Activated T-helper 1 cell treated with anti-CD3 and anti-CD28 coated beads, Interleukin-12 subunit alpha, Interleukin-12 subunit beta, Interleukin-2, Interleukin-4 antibody, amounts not matched to agents 30 ng/mL and 10 ng/mL and 1 ng/mL, durations not matched to agents 14 hours and 24 hours and 36 hours (primary cell): ENCODE measurements at regions of chr16 and their contacts with region 1.

Region 1: DNA sequence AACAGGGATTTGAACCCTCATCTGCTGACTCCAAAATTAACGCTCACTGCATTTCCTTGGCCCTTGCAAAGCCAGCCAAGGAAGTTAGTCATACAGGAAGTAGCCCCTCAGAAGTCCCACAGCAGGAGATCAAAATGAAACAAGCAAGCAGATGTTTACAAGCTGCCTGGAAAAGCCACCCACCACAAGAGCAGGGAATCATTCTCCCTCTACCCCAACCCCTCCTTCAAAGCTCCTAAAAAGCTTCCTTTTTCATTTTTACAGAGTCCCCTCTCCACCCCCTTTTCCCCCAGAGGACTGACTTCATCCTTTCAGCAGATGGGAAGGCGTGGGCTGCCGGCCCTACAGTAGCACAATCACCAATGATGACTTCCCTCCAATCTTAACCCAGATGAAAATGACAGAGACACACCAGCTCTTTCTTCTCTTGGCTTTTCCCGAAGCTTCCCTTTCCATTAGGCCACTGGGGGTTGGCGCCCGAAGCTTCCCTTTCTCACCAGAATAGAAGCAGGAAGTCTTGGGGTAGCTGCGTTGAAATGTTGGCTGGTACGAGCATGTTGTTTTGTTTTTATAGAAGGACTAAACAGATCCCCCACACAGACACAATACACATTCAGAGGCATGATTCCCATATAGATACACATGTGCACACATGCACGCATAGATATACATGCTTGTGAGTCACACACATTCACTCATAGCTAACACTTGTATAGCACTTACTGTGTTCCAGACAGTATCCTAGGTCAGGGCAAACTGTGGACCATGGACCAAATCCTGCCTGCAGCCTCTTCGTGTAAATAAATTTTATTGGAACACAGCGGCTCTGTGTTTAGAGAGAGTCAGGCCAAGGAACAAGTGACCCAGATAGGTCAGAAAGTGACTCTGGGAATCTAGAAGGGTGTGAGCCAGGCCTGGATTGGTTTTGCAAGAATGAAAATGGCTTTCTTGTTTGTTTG is 17.4 kb downstream of the ITPRIPL2 start:
- DNase-seq: no peak
- H3K4me3 Mint-ChIP-seq: peak overlapping the region; percentile 62
- H3K27ac Mint-ChIP-seq: peak overlapping the region; percentile 73
- H3K4me1 Mint-ChIP-seq: peaks cover 49% of the 10 kb centered on the region
- H3K27me3 Mint-ChIP-seq: peaks cover 3% of the 10 kb centered on the region

Region 2: GRCh38 chr16:19067349-19068236 is 63.5 kb before region 1 on chr16 and contains the start of gene COQ7:
- intact Hi-C with region 1: no loop called
- DNase-seq: peak; percentile 97
- H3K4me3 Mint-ChIP-seq: peak within 1 kb of the TSS; percentile 84
- H3K27ac Mint-ChIP-seq: peak within 1 kb of the TSS; percentile 98
- H3K4me1 Mint-ChIP-seq: peaks cover 21% of the 10 kb centered on the region
- H3K27me3 Mint-ChIP-seq: peaks cover 1% of the 10 kb centered on the region
- total RNA-seq, gene COQ7: 17.3 and 19.6 TPM in 2 replicates

Region 3: DNA sequence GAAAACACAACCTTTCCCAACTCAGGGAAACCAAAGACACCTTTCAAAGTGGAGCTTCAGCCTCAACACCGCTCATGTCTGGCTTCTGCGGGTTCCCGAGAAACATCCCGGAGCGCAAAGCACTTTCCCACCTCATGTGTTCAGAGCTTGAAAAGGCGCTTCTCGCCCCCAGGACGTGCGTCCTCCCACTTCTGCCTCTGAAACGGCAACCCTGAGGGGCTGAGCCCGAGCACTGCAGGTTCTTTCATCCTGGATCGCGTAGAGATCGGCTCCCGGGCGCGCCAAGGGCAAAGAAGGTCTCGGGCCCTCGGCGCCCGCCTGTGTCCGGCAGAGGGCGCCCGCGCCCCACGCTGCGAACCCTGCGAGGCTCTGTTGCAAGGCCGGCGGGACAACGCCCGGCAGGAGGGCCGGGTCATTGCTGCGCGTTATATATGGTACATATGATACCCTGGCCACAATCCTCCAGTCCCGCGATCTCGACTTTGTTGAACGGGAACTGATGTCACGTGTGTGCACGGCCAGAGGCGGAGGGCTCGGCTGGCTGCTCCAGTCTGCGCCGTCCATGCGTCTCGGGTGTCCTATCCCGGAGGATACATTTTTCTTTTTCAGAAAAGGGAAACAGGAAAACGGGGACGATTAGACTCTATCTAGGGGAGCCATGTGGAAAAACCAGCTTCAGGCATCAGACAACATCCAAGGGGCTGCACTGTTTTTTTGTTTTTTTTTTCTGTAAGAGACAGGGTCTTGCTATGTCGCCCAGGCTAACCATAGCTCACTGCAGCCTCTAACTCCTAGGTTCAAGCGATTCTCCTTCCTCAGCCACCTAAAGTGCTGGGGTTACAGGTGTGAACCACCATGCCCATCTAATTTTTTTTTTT is 44.6 kb before region 1 on chr16:
- intact Hi-C with region 1: no loop called
- DNase-seq: peak; percentile 75
- H3K4me3 Mint-ChIP-seq: peak overlapping the region; percentile 54
- H3K27ac Mint-ChIP-seq: no peak overlapping the region
- H3K4me1 Mint-ChIP-seq: no peaks in the 10 kb centered on the region
- H3K27me3 Mint-ChIP-seq: peaks cover 7% of the 10 kb centered on the region

Region 4: GRCh38 chr16:19167710-19168370 is 36.7 kb after region 1 on chr16 and contains the start of gene SYT17:
- intact Hi-C with region 1: loop called (anchors 5 kb)
- DNase-seq: peak; percentile 14
- H3K4me3 Mint-ChIP-seq: no peak within 1 kb of the TSS
- H3K27ac Mint-ChIP-seq: no peak within 1 kb of the TSS
- H3K4me1 Mint-ChIP-seq: no peaks in the 10 kb centered on the region
- H3K27me3 Mint-ChIP-seq: peaks cover 39% of the 10 kb centered on the region
- total RNA-seq, gene SYT17: 0.37 and 0.54 TPM in 2 replicates